ENCODE measurements at regions of chr11 and their contacts with region 1.

Region 1: GRCh38 chr11:69443138-69443967 is 38.1 kb upstream of the LINC01488 start:
- DNase-seq: peak; percentile 70 to 91
- H3K4me3 ChIP-seq: peak overlapping the region in 1 of 4 experiments; percentile 38; a peak in 1 of 8 replicates
- H3K27ac ChIP-seq: 0 out of 2 replicates have a peak overlapping the region, but pooled peaks have one; percentile 3
- H3K4me1 ChIP-seq: peaks cover 13 to 37% (median 33%) of the 10 kb centered on the region in 4 experiments
- H3K27me3 ChIP-seq: no peaks in the 10 kb centered on the region; a peak in 2 of 7 replicates
- CTCF ChIP-seq: peak in 1 of 3 experiments; percentile 13; a peak in 1 of 4 replicates
- EP300 ChIP-seq: no peak
- POLR2A ChIP-seq: peak in 1 of 2 experiments; percentile 64; a peak in 1 of 3 replicates
- RAD21 ChIP-seq: peak in 1 of 2 experiments; percentile 0; a peak in 1 of 4 replicates

Region 2: GRCh38 chr11:69455969-69456368 is 12.6 kb after region 1 on chr11:
- CTCF ChIA-PET with region 1: interaction called, 11 read pairs
- POLR2A ChIA-PET with region 1: interaction called, 3 read pairs
- DNase-seq: no peak
- H3K4me3 ChIP-seq: no peak overlapping the region
- H3K27ac ChIP-seq: no peak overlapping the region
- H3K4me1 ChIP-seq: no peaks in the 10 kb centered on the region; a peak in 1 of 7 replicates
- H3K27me3 ChIP-seq: no peaks in the 10 kb centered on the region
- CTCF ChIP-seq: no peak
- EP300 ChIP-seq: no peak
- POLR2A ChIP-seq: no peak
- RAD21 ChIP-seq: no peak

Measured in H1 (cell line).